Right ventricle myocardium inferior (tissue), 1 donor: ENCODE measurements at regions of chr1 and their contacts with region 1.

Region 1: GRCh38 chr1:116982319-116983004 is 19.1 kb upstream of the CD101 start:
- DNase-seq: no peak
- ATAC-seq: peak; percentile 37

Region 2: DNA sequence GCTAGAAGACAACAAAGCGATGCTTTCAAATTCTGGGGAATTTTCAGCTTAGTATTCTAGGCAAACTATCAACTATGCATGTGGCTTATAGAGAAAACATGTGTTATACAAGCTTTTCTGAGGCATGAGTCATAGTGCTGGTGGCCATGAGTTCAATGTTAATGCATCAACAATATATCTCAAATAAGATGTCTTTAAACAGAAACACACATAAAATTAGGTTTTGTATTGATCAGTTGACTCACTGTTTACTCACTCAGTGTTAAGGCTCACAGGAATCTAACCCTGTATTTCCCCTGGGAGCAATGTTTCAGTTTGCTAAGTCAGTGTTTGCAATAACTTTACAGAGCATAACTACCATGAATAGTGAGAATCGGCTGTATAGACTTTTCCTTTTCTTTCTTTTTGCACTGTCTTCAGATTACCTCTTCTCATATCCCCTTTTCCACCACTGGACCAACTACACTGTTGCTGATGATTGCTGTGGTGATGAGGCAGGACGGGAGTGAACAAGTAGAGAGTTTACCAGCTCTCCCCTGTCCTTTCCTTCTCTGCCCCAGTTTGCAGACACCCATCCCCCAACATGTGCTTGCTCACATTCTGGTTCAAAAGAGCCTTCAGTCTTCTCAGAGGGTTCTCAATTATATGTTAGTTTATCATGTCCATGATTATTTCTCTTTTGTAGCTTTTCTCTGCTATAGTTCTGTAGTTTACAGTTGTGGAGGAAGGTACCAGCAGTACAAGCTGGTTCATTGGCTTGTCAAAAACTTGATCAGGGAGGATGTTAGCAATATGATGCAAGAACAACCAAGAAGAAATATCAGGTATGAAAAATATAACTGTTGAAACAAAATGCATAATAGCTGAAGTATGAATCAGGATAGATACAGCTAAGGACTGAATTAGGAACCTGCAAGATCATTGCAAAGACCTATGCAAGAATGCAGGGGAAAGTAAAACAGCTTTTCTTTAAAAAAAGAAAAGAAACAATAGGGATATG is 204.3 kb before region 1 on chr1:
- intact Hi-C with region 1: no loop called
- DNase-seq: no peak
- ATAC-seq: no peak

Region 3: DNA sequence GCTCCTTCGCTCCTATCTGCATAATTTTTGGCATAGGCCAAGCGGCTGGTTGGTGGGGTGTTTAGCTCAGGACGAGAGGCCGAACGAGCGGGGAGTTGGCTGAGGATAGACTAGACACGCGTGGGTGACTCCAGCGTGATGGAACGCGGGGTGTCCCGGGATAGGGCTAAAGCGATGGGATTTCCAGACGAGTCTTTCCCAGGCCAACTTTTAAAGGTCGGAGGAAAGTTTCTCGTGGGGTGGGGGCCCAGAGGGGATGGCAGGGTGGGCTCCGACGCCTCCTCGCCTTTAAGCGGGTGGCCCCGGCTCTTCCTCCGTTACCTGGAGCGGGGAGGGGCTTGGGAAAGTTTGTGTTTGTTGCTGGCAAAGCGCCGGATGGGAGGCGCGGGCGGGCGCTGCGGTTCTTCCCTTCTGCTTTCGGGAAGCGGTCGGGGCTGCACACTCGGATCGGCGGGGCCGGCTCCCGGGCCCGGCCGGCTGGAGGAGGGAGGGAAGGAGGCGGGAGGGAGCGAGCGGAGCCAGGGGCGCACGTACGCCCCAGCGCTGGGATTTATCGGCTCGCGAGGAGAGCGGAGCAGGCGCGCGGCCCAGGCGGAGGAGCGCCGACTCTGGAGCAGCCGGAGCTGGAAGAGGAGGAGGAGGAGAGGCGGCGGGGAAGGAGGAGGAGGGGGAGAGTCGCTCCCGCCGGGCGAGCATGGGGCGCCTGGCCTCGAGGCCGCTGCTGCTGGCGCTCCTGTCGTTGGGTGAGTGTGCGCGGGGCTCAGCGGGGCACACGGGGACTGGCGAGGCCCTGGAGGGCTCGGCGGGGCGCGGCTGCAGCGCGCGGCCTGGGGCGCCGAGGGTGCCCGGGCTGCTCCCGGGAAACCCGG is 72.7 kb before region 1 on chr1 and contains the start of gene PTGFRN:
- intact Hi-C with region 1: loop called (anchors 2 kb)
- DNase-seq: peak; percentile 83
- ATAC-seq: peak; percentile 87
- total RNA-seq, gene PTGFRN: 119 TPM

Region 4: GRCh38 chr1:117067533-117068370 is 85.3 kb after region 1 on chr1:
- intact Hi-C with region 1: no loop called
- DNase-seq: no peak
- ATAC-seq: peak; percentile 90